Activated B cell treated with CpG ODN at 0.5 μM for 24 hours (primary cell): ENCODE measurements at regions of chr6 and their contacts with region 1.

Region 1: DNA sequence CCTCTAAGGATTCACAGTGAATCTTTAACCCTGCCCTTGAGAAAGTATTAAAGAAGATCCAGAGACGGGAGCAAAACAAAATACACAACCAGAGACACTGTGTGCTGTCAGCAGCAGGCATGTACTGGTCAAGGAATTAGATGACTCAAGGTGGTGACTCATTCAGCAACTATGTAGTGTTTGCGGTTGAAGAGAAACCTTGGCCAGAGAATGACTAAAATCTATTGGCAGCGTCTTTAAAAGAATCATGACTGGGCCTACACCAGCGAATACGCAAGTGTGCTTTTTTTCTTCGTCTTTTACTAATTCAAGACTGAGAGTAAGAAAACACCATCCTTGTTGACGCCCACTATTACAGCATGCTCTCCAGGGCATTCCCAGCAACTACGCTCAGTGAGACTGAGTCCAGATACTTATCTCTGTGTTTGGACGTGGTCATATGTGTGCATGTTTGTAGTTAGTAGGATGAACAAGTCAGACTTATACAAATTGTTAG is 72.4 kb upstream of the BACH2 start:
- DNase-seq: no peak
- ATAC-seq: peak; percentile 90
- H3K4me3 Mint-ChIP-seq: no peak overlapping the region
- H3K27ac Mint-ChIP-seq: peak overlapping the region; percentile 6
- H3K4me1 Mint-ChIP-seq: peaks cover 47% of the 10 kb centered on the region
- H3K27me3 Mint-ChIP-seq: no peaks in the 10 kb centered on the region
- CTCF ChIP-seq: no peak

Region 2: DNA sequence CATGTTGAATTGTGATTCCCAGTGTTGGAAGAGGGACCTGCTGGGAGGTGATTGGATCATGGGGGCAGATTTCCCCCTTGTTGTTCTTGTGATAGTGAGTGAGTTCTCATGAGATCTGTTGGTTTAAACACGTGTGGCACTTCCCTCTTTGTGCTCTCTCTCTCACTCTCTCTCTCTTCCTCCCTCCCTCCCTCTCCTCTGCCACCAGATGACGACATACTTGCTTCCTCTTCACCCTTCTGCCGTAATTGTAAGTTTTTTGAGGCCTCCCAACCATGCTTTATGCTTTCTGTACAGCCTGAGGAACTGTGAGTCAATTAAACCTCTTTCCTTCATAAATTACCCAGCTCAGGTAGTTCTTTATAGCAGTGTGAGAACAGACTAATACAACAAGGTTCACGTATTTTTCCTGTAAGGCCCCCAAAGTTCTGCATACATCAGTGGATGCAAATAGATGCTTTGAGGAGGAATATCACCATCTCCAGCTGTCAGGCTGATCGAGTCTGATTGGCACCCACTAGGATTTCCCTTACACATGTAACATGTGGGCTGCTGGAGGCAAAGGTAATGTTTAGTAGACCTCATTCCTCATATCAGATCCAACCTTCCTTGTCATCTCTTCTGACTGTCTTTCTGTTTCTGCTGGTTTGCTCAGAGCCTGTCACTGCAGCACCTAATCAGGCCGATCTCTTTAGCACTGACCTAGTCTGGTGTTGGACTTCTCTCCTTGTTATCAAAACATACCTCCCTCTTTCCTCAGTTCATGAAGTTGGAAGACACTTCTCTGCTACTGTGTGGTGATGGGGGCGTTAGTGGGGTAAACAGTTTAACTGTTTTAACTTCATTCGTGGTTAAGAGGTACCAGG is 18.1 kb before region 1 on chr6:
- CTCF ChIA-PET with region 1: no interaction called
- POLR2A ChIA-PET with region 1: no interaction called
- intact Hi-C with region 1: loop called (anchors 2 kb)
- DNase-seq: peak; percentile 20
- ATAC-seq: peak; percentile 95
- H3K4me3 Mint-ChIP-seq: peak overlapping the region; percentile 33
- H3K27ac Mint-ChIP-seq: peak overlapping the region; percentile 95
- H3K4me1 Mint-ChIP-seq: peaks cover 40% of the 10 kb centered on the region
- H3K27me3 Mint-ChIP-seq: no peaks in the 10 kb centered on the region
- CTCF ChIP-seq: no peak

Region 3: GRCh38 chr6:90502866-90503407 is 133.9 kb after region 1 on chr6:
- CTCF ChIA-PET with region 1: no interaction called
- POLR2A ChIA-PET with region 1: no interaction called
- intact Hi-C with region 1: no loop called
- DNase-seq: no peak
- ATAC-seq: peak; percentile 37
- H3K4me3 Mint-ChIP-seq: no peak overlapping the region
- H3K27ac Mint-ChIP-seq: no peak overlapping the region
- H3K4me1 Mint-ChIP-seq: no peaks in the 10 kb centered on the region
- H3K27me3 Mint-ChIP-seq: no peaks in the 10 kb centered on the region
- CTCF ChIP-seq: no peak